PC-3 (cell line): ENCODE measurements at regions of chr1 and their contacts with region 1.

Region 1: GRCh38 chr1:14567056-14567455 is 31.4 kb upstream of the KAZN start:
- DNase-seq: peak; percentile 23
- ATAC-seq: no peak
- H3K4me3 ChIP-seq: no peak overlapping the region
- H3K27ac ChIP-seq: no peak overlapping the region
- H3K4me1 ChIP-seq: peaks cover 15% of the 10 kb centered on the region
- H3K27me3 ChIP-seq: no peaks in the 10 kb centered on the region
- CTCF ChIP-seq: peak; percentile 36; the same call in 1 of the 2 replicates

Region 2: DNA sequence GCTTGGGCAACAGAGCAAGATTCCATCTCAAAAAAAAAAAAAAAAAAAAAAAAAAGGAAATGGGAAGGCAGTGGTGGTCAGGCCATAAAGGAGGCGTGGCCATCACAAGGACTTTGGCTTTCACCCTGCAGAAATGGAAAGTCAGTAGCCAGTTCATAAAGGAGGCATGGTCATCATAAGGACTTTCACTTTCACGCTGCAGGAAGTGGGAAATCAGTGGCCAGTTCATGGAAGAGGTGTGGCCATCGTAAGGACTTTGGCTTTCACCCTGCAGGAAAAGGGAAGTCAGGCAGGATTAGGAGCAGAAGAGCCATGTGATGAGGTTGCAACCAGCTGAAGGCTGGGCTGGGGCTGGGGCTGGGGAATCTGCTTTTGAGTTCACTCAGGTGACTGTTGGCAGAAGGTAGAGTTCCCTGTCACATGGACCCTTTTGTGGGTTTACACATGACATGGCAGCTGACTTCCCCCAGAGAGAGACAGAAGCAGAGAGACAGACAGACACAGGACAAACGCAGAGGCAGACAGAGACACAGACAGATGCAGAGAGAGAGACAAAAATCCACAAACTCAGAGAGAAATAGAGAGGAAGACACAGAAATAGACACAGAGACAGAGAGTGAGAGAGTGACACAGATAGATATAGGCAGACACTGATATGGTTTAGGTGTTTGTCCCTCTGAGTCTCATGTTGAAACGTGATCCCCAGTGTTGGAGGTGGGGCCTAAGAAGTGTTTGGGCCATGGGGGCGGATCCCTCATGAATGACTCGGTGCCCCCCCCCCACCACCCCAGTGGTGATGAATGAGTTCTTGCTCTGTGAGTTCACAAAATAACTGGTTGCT is 232.5 kb before region 1 on chr1:
- CTCF ChIA-PET with region 1: no interaction called
- POLR2A ChIA-PET with region 1: no interaction called
- intact Hi-C with region 1: no loop called
- DNase-seq: peak; percentile 13
- ATAC-seq: no peak; the same call in 1 of the 2 replicates
- H3K4me3 ChIP-seq: no peak overlapping the region
- H3K27ac ChIP-seq: no peak overlapping the region
- H3K4me1 ChIP-seq: peaks cover 17% of the 10 kb centered on the region
- H3K27me3 ChIP-seq: no peaks in the 10 kb centered on the region
- CTCF ChIP-seq: no peak

Region 3: GRCh38 chr1:14476170-14476955 is 90.7 kb before region 1 on chr1:
- CTCF ChIA-PET with region 1: no interaction called
- POLR2A ChIA-PET with region 1: no interaction called
- intact Hi-C with region 1: no loop called
- DNase-seq: peak; percentile 55
- ATAC-seq: no peak
- H3K4me3 ChIP-seq: no peak overlapping the region
- H3K27ac ChIP-seq: no peak overlapping the region
- H3K4me1 ChIP-seq: peaks cover 17% of the 10 kb centered on the region
- H3K27me3 ChIP-seq: no peaks in the 10 kb centered on the region
- CTCF ChIP-seq: no peak

Region 4: DNA sequence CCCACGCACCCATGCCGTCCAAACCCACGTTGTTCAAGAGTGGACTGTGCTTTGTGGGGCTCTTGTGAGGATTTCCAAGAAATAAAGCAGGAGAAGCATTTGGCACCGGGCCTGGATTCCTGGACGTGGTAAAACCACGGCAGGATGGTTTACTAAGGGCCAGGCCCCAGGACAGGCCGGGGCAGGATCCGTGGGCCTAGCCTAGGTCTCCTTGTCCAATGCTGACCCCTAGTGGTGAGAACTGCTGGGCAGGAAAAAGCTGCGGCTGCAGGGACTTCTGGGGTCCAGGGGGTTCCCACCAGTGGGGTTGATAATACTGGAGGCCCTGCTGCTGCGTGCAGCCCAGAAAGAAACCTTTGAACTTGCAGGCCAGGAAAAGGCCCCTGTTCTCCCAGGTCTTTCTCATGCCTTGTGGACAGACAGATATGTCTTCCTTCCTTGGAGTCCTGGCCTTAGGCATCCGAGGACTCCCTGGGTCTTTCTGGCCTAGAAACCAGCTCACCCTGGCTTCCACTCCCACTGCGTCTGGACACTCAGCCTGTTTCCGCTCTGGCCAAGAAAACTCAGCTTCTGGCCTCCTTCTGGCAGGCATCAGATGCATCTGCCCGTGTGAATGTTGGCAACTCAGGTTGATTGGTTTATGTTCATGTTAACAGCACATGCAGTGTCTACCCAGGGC is 479.6 kb after region 1 on chr1:
- CTCF ChIA-PET with region 1: no interaction called
- POLR2A ChIA-PET with region 1: no interaction called
- intact Hi-C with region 1: loop called (anchors 10 kb)
- DNase-seq: peak; percentile 78
- ATAC-seq: peak; percentile 93
- H3K4me3 ChIP-seq: no peak overlapping the region
- H3K27ac ChIP-seq: no peak overlapping the region
- H3K4me1 ChIP-seq: no peaks in the 10 kb centered on the region
- H3K27me3 ChIP-seq: no peaks in the 10 kb centered on the region
- CTCF ChIP-seq: peak; percentile 96